ENCODE measurements at regions of chr10 and their contacts with region 1.

Region 1: DNA sequence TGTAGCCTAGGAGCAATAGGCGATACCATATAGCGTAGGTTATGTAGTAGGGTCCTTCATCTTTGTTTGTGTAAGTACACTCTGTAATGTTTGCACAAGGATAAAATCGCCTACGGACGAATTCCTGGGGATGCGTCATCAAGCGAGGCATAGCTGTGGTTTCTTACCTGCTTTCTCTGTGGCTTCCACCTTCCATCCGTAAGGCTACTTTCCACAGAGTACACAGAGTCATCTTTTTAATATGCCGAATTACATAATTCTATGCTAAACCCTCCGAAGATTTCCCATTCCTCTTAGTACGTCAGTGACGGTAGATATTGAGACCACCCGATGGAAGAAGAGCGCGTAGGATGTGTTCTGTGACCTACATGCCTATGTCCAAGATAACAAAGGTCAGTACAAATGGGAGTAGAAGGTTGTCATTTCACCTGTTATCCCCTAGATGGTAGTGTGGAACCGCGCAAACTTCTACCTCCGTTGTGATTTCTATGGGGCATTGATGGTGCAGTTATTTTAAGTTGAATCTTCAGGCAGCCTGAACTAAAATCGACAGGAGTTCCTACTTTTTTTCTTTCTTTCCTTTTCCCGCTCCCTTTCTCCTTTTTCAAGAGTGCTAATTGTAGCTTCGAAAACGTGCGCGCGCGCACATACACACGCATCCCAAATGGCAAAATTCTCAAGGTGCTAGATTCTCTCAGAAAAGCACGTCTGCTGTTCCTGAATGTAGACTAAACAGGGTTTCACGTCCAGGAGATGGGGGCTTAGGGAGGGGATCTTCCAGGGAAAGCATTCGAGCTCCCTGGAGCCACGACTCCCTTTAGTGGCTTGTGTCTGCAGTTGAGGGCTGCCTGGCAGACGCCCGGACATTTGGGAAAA is 111.7 kb upstream of the MBL2 start:
- DNase-seq: peak; percentile 97
- H3K4me3 ChIP-seq: peak overlapping the region; percentile 35 to 54 (median 49)
- H3K27ac ChIP-seq: peak overlapping the region; percentile 81
- H3K4me1 ChIP-seq: peaks cover 23% of the 10 kb centered on the region
- H3K27me3 ChIP-seq: no peaks in the 10 kb centered on the region
- CTCF ChIP-seq: peak; percentile 86 to 87

Region 2: DNA sequence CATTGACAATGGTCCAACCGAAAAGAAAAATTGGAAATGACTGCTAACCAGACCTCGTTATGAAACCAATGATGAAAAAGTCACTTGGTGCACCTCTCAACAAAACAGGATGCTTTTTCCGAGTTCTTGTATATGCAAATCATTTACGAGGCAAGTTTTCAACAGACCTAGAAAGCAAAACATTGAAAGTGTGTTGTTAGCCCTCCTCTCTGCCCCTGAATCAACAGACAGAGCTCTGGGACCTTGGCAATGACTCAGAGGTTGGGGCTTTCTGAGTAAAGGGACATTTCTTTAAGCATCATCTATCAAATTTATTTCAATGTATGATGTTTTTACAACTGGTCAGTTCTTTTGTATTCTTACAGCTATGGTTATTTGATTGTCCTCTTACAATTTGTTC is 586.5 kb before region 1 on chr10:
- CTCF ChIA-PET with region 1: no interaction called
- dilution Hi-C with region 1: no loop called
- in situ Hi-C with region 1: no loop called
- intact Hi-C with region 1: no loop called
- DNase-seq: no peak
- H3K4me3 ChIP-seq: no peak overlapping the region
- H3K27ac ChIP-seq: no peak overlapping the region
- H3K4me1 ChIP-seq: no peaks in the 10 kb centered on the region
- H3K27me3 ChIP-seq: no peaks in the 10 kb centered on the region
- CTCF ChIP-seq: no peak

Region 3: DNA sequence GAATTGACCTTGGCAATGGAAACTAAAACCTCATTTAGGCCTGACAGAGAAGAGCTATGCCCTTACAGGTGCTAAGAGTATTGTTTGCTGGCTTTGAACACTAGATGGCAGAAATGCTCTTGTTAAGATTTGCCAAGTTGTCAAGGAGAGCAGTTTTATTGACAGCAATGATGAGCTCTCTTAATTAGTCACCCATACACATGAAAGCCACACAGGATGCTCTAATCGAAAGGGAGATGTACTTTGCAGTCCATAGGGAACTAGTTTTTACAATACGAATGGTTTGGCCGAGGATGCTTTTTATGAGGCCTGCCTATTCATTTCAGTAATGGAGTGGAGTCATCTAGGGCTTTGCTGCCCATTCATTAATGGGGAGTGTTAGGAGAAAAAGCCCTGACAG is 66.2 kb before region 1 on chr10:
- CTCF ChIA-PET with region 1: interaction called, 10 read pairs
- dilution Hi-C with region 1: no loop called
- in situ Hi-C with region 1: no loop called
- intact Hi-C with region 1: loop called (anchors 1 kb)
- DNase-seq: peak; percentile 79
- H3K4me3 ChIP-seq: no peak overlapping the region
- H3K27ac ChIP-seq: peak overlapping the region; percentile 22
- H3K4me1 ChIP-seq: peaks cover 5% of the 10 kb centered on the region
- H3K27me3 ChIP-seq: no peaks in the 10 kb centered on the region
- CTCF ChIP-seq: peak; percentile 74 to 81

Region 4: GRCh38 chr10:52951824-52952223 is 67.6 kb after region 1 on chr10:
- CTCF ChIA-PET with region 1: no interaction called
- dilution Hi-C with region 1: no loop called
- in situ Hi-C with region 1: no loop called
- intact Hi-C with region 1: loop called (anchors 5 kb)
- DNase-seq: peak; percentile 8
- H3K4me3 ChIP-seq: no peak overlapping the region
- H3K27ac ChIP-seq: no peak overlapping the region
- H3K4me1 ChIP-seq: peaks cover 5% of the 10 kb centered on the region
- H3K27me3 ChIP-seq: no peaks in the 10 kb centered on the region
- CTCF ChIP-seq: peak; percentile 2 to 40

Region 5: GRCh38 chr10:53177468-53177867 is 293.2 kb after region 1 on chr10:
- CTCF ChIA-PET with region 1: no interaction called
- dilution Hi-C with region 1: no loop called
- in situ Hi-C with region 1: no loop called
- intact Hi-C with region 1: no loop called
- DNase-seq: no peak
- H3K4me3 ChIP-seq: no peak overlapping the region
- H3K27ac ChIP-seq: no peak overlapping the region
- H3K4me1 ChIP-seq: no peaks in the 10 kb centered on the region
- H3K27me3 ChIP-seq: peaks cover 3% of the 10 kb centered on the region
- CTCF ChIP-seq: no peak

Region 6: DNA sequence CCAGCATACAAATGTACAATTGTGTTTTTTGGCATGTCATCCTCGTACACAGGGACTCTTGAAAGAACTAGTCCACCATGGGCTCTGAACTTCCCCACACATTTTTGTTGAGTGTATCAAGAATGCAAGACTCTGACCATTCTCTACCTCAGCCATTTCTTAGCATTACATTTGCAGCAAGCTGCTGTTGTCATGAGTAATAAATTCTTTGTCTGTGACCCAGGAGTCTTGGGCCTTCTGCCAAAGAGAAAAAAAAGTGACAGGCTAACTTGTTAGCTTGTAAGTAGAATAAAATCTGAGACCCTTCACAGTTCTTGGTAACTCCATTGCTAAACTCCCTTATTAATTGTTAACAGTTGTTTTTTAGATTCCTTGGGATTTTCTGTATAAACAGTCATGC is 430.6 kb after region 1 on chr10:
- CTCF ChIA-PET with region 1: no interaction called
- dilution Hi-C with region 1: no loop called
- in situ Hi-C with region 1: no loop called
- intact Hi-C with region 1: loop called (anchors 1 kb)
- DNase-seq: peak; percentile 87
- H3K4me3 ChIP-seq: no peak overlapping the region
- H3K27ac ChIP-seq: peak overlapping the region; percentile 39
- H3K4me1 ChIP-seq: no peaks in the 10 kb centered on the region
- H3K27me3 ChIP-seq: no peaks in the 10 kb centered on the region
- CTCF ChIP-seq: no peak

Region 7: GRCh38 chr10:53839440-53840039 is 955.3 kb after region 1 on chr10:
- CTCF ChIA-PET with region 1: no interaction called
- dilution Hi-C with region 1: no loop called
- in situ Hi-C with region 1: no loop called
- intact Hi-C with region 1: loop called (anchors 1 kb)
- DNase-seq: peak; percentile 8
- H3K4me3 ChIP-seq: no peak overlapping the region
- H3K27ac ChIP-seq: no peak overlapping the region
- H3K4me1 ChIP-seq: peaks cover 5% of the 10 kb centered on the region
- H3K27me3 ChIP-seq: no peaks in the 10 kb centered on the region
- CTCF ChIP-seq: peak; percentile 41 to 59

Region 8: GRCh38 chr10:54402576-54402975 is 1518.3 kb after region 1 on chr10:
- CTCF ChIA-PET with region 1: no interaction called
- dilution Hi-C with region 1: no loop called
- in situ Hi-C with region 1: no loop called
- intact Hi-C with region 1: loop called (anchors 2 kb)
- DNase-seq: peak; percentile 32
- H3K4me3 ChIP-seq: no peak overlapping the region
- H3K27ac ChIP-seq: no peak overlapping the region
- H3K4me1 ChIP-seq: no peaks in the 10 kb centered on the region
- H3K27me3 ChIP-seq: peaks cover 2% of the 10 kb centered on the region
- CTCF ChIP-seq: peak; percentile 31 to 59

Measured in mammary epithelial cell (primary cell).